Mammary epithelial cell (primary cell): ENCODE measurements at regions of chr3 and their contacts with region 1.

Region 1: DNA sequence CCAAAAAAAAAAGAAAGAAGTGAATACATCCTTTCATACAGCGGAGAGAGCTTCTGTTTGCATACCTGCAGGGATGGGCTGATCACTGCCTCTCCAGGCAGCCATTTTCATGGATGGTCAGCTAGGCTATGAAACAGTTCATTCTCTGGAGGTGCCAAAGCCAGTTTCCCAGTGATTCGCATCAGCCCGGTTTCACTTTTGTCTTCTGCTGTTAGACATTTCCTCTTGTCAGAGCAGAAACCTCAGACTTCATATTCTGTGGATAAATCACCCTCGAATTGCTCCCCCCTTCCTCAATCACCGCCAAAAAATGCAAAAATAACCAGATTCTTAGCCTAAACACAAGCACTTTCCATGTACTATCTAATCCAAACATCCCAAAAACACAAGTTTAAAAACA is 225.6 kb downstream of the ADAMTS9 start:
- DNase-seq: no peak
- H3K4me3 ChIP-seq: no peak overlapping the region
- H3K27ac ChIP-seq: no peak overlapping the region
- H3K4me1 ChIP-seq: peaks cover 2% of the 10 kb centered on the region
- H3K27me3 ChIP-seq: no peaks in the 10 kb centered on the region
- CTCF ChIP-seq: no peak

Region 2: DNA sequence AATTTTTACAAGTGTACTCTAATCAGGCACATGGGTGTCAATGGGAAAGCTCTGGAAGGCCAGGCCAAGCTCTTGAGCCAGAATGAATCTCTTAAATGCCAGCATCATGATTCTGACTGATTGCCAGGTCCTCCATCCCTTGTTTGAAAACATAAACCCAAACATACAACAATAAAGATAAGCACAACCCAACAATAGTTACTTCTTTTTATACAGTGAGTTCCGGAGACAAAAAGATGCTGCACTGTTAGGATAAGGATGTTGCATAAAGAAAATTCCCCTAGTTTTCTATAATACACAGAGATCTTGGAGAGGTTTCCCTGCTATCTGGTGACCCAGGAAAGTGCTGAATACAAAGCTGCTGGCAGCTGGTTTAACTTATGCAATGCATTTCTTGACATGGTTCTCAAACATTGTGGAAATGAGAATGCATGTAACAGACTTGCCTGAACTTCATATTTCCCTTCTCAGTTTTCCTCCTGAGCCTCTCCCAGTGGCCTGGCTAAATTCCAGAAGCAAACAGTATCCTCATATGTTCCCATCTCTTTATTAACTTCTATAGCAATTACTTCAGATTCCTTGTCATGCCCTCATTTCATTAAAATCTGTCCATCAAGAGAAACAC is 56.9 kb before region 1 on chr3:
- CTCF ChIA-PET with region 1: no interaction called
- dilution Hi-C with region 1: loop called (anchors 5 kb)
- in situ Hi-C with region 1: no loop called
- intact Hi-C with region 1: no loop called
- DNase-seq: no peak
- H3K4me3 ChIP-seq: no peak overlapping the region
- H3K27ac ChIP-seq: no peak overlapping the region
- H3K4me1 ChIP-seq: no peaks in the 10 kb centered on the region
- H3K27me3 ChIP-seq: no peaks in the 10 kb centered on the region
- CTCF ChIP-seq: no peak